ENCODE measurements at regions of chr3 and their contacts with region 1.

Region 1: GRCh38 chr3:179071550-179072397 is at the start of gene ZMAT3:
- DNase-seq: peak; percentile 81 to 89 (median 88)
- ATAC-seq: peak; percentile 92
- H3K4me3 ChIP-seq: peak within 1 kb of the TSS; percentile 66
- H3K27ac ChIP-seq: peak within 1 kb of the TSS; percentile 46
- H3K4me1 ChIP-seq: peaks cover 7 to 17% of the 10 kb centered on the region in 2 experiments; a peak in 4 of 5 replicates
- H3K27me3 ChIP-seq: no peaks in the 10 kb centered on the region
- CTCF ChIP-seq: no peak
- EP300 ChIP-seq: no peak
- POLR2A ChIP-seq: peak; percentile 84
- RAD21 ChIP-seq: no peak
- polyA plus RNA-seq, gene ZMAT3: 0.87 to 1.2 TPM

Region 2: DNA sequence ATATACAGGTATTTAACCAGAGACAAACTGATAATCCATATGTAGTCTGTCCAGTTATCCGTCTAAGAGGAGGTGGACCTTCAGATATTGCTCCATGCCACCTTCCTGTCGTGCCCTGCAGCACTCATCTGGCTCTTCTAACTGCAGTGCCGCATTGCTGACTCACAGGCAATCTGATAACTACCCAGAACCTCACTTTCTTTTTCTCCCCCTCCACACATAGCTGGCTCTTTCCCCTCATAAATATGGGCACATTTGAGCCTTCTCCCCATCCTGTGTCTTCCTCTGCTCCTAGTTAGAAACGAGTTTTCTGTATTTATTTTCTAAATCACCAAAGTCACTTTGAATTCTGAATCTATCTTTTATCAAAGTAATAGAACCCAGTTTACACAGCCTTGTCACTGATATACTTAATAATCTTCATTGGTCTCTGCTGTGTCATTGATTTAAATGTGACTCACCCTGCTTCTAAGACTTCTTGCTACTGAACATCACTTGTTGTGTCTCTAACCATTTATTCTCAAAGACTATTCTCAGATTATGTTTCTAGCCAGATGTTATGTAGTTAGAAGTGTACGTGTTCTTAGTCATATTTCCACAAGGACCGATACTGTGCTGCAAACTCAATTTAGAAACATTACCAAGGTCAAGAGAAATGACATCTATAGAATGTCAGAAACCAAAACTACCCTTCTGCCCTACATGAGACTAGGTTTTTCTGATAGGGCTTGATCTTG is 552.9 kb before region 1 on chr3:
- CTCF ChIA-PET with region 1: no interaction called
- POLR2A ChIA-PET with region 1: no interaction called
- in situ Hi-C with region 1: no loop called
- intact Hi-C with region 1: no loop called
- DNase-seq: no peak
- ATAC-seq: no peak
- H3K4me3 ChIP-seq: no peak overlapping the region
- H3K27ac ChIP-seq: no peak overlapping the region
- H3K4me1 ChIP-seq: no peaks in the 10 kb centered on the region
- H3K27me3 ChIP-seq: no peaks in the 10 kb centered on the region
- CTCF ChIP-seq: no peak
- EP300 ChIP-seq: no peak
- POLR2A ChIP-seq: no peak
- RAD21 ChIP-seq: no peak

Region 3: DNA sequence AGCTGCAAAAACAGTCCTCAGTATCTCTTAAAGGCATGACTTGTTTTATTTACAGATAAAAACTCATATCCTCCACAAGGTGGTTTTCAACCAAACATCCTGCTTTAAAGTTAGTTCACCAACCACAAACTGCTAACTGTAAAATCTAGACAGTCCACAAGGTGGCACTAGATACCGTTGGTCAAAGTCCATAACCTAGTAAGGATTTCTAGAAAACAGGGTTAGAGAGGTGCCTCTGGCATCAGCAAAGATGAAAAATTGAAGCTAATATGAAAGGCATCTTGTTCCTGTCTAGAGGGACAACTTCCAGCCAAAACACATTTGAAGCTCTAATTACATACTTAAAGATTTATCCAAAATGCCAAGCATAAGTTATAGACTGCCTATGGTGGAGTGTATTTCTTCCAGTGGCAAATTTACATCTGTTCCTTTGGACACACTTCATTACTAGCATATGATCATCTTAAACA is 56.2 kb before region 1 on chr3:
- CTCF ChIA-PET with region 1: no interaction called
- POLR2A ChIA-PET with region 1: no interaction called
- in situ Hi-C with region 1: no loop called
- intact Hi-C with region 1: loop called (anchors 2 kb)
- DNase-seq: peak; percentile 56 to 87 (median 64)
- ATAC-seq: peak; percentile 92
- H3K4me3 ChIP-seq: no peak overlapping the region
- H3K27ac ChIP-seq: no peak overlapping the region
- H3K4me1 ChIP-seq: peaks cover 0 to 6% of the 10 kb centered on the region in 2 experiments; a peak in 2 of 5 replicates
- H3K27me3 ChIP-seq: no peaks in the 10 kb centered on the region
- CTCF ChIP-seq: peak; percentile 80 to 91 (median 85)
- EP300 ChIP-seq: no peak
- POLR2A ChIP-seq: no peak
- RAD21 ChIP-seq: peak; percentile 96 to 97

Region 4: GRCh38 chr3:179100652-179101051 is 28.9 kb after region 1 on chr3:
- CTCF ChIA-PET with region 1: interaction called, 6 read pairs
- POLR2A ChIA-PET with region 1: no interaction called
- in situ Hi-C with region 1: no loop called
- intact Hi-C with region 1: loop called (anchors 2 kb)
- DNase-seq: peak; percentile 13 to 84 (median 38)
- ATAC-seq: peak; percentile 90
- H3K4me3 ChIP-seq: no peak overlapping the region
- H3K27ac ChIP-seq: peak overlapping the region; percentile 27; the same call in 1 of the 3 replicates
- H3K4me1 ChIP-seq: peaks cover 5 to 7% of the 10 kb centered on the region in 2 experiments; a peak in 4 of 5 replicates
- H3K27me3 ChIP-seq: no peaks in the 10 kb centered on the region
- CTCF ChIP-seq: no peak
- EP300 ChIP-seq: peak; percentile 39; the same call in 1 of the 2 replicates
- POLR2A ChIP-seq: no peak
- RAD21 ChIP-seq: 0 out of 4 replicates have a peak, but pooled peaks of 1 of the 2 experiments have one; percentile 16

Region 5: DNA sequence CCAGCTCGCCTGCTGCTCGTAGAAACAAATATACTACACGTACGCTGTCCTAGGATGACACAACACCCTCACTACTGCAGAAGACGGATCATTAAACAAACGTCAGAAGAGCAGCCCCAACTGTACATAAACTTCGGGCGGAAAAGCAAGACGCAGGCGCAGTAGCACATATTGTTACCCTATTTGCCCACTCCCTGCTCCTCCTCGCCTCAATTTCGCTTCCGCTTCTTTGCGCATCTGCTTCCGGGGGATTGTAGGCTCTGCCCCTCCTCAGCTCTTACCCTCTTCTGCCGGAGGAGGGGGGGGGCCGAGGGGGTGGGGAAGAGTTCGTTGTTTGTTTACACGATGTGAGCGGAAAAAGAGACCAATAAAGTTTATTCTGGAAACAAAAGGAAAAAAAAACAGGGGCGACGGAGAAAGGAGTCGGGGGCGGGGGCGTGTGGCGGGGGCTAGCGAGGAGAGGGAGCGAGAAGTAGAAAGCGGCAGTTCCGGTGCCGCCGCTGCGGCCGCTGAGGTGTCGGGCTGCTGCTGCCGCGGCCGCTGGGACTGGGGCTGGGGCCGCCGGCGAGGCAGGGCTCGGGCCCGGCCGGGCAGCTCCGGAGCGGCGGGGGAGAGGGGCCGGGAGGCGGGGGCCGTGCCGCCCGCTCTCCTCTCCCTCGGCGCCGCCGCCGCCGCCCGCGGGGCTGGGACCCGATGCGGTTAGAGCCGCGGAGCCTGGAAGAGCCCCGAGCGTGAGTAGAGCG is 76.3 kb after region 1 on chr3 and contains the start of gene PIK3CA:
- CTCF ChIA-PET with region 1: no interaction called
- POLR2A ChIA-PET with region 1: no interaction called
- in situ Hi-C with region 1: no loop called
- intact Hi-C with region 1: loop called (anchors 5 kb)
- DNase-seq: peak; percentile 90 to 98 (median 92)
- ATAC-seq: peak; percentile 90
- H3K4me3 ChIP-seq: peak within 1 kb of the TSS; percentile 95
- H3K27ac ChIP-seq: peak within 1 kb of the TSS; percentile 90
- H3K4me1 ChIP-seq: peaks cover 5 to 14% of the 10 kb centered on the region in 2 experiments; a peak in 3 of 5 replicates
- H3K27me3 ChIP-seq: no peaks in the 10 kb centered on the region
- CTCF ChIP-seq: no peak
- EP300 ChIP-seq: no peak; the same call in none of the 2 replicates
- POLR2A ChIP-seq: peak; percentile 81
- RAD21 ChIP-seq: no peak
- polyA plus RNA-seq, gene PIK3CA: 3.8 to 4.8 TPM

Region 6: DNA sequence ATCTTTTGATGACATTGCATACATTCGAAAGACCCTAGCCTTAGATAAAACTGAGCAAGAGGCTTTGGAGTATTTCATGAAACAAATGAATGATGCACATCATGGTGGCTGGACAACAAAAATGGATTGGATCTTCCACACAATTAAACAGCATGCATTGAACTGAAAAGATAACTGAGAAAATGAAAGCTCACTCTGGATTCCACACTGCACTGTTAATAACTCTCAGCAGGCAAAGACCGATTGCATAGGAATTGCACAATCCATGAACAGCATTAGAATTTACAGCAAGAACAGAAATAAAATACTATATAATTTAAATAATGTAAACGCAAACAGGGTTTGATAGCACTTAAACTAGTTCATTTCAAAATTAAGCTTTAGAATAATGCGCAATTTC is 162.4 kb after region 1 on chr3:
- CTCF ChIA-PET with region 1: no interaction called
- POLR2A ChIA-PET with region 1: no interaction called
- in situ Hi-C with region 1: no loop called
- intact Hi-C with region 1: loop called (anchors 5 kb)
- DNase-seq: no peak
- ATAC-seq: no peak
- H3K4me3 ChIP-seq: no peak overlapping the region
- H3K27ac ChIP-seq: no peak overlapping the region
- H3K4me1 ChIP-seq: peaks cover 0 to 5% of the 10 kb centered on the region in 2 experiments; a peak in 1 of 5 replicates
- H3K27me3 ChIP-seq: no peaks in the 10 kb centered on the region
- CTCF ChIP-seq: no peak
- EP300 ChIP-seq: no peak
- POLR2A ChIP-seq: no peak
- RAD21 ChIP-seq: no peak

Region 7: DNA sequence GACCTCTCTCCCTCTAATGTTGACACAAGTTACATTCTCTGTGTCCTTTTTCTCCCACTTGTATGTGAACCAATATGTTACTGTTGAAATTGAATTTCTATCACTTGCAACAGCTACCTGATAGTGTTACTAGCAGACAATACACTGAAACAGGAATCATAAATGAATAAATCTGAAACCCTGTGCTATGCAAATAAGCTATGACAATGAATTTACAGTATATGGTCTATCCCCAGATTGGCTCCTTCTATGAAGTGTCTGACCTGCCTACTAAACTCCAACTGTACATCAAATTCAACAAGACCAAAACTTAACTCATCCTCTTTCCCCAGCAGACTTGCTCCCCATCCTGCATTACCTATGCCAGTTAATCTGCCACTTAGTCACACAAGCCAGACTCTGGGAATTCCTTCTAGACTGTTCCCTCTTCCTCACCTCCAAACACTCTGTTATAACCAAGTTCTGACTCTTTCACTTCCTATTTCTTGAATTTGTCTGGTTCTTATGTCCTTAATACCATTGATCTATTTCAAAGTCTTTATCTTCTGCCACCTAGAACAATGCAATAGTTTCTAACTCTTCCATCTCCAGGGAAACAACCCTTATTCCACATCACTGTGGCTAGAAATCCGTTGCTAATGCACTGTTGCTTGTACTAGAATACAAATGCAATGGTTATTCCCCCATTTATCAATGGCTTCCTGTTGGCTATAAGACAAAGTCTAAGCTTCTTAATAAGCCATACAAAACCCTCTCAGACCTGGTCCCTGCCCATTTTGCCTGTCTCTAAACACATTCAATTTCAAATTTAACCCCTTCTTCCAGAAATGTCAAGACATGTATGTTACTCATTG is 237.7 kb after region 1 on chr3:
- CTCF ChIA-PET with region 1: interaction called, 25 read pairs
- POLR2A ChIA-PET with region 1: no interaction called
- in situ Hi-C with region 1: no loop called
- intact Hi-C with region 1: no loop called
- DNase-seq: no peak
- ATAC-seq: no peak
- H3K4me3 ChIP-seq: no peak overlapping the region
- H3K27ac ChIP-seq: no peak overlapping the region
- H3K4me1 ChIP-seq: peaks cover 0 to 3% of the 10 kb centered on the region in 2 experiments; a peak in 3 of 5 replicates
- H3K27me3 ChIP-seq: no peaks in the 10 kb centered on the region
- CTCF ChIP-seq: no peak
- EP300 ChIP-seq: no peak
- POLR2A ChIP-seq: no peak
- RAD21 ChIP-seq: no peak

Region 8: DNA sequence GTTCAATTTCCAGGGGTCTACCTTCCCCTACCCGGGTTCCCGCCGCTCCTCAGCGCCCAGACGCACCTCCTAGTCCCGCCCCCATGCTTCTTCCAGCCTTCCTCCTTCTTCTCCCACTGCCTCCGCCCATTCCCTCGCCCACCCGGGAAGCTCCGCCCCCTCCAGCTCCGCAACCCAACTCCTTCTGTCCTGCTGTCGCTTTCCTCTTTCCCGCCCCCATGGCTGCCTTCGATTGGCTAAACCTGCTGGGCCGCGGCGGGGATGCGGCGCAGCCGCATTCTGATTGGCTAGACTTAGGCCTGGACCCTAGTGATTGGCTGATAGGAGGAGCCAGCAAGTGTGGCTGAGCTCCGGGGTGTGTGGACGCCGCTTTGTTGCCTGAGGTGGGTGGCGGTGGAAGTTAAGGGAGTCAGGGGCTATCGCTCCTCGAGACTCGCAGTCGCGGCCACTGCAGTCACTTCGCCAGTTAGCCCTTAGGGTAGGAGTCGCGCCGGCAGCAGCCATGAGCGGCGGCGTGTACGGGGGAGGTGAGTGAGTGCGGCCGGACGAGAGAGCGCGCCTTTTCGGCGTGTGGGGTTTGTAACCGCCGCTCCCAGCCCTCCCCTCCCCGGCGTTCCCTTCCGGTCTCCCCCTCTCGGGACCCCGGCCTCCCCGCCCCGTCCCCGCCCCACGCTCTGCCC is 491.0 kb after region 1 on chr3 and contains the start of gene ACTL6A:
- CTCF ChIA-PET with region 1: no interaction called
- POLR2A ChIA-PET with region 1: no interaction called
- in situ Hi-C with region 1: no loop called
- intact Hi-C with region 1: loop called (anchors 2 kb)
- DNase-seq: peak; percentile 99 to 100 (median 99)
- ATAC-seq: peak; percentile 96
- H3K4me3 ChIP-seq: peak within 1 kb of the TSS; percentile 79
- H3K27ac ChIP-seq: peak within 1 kb of the TSS; percentile 93
- H3K4me1 ChIP-seq: peaks cover 8 to 9% of the 10 kb centered on the region in 2 experiments; a peak in 3 of 5 replicates
- H3K27me3 ChIP-seq: no peaks in the 10 kb centered on the region
- CTCF ChIP-seq: no peak
- EP300 ChIP-seq: no peak
- POLR2A ChIP-seq: peak; percentile 98
- RAD21 ChIP-seq: no peak
- polyA plus RNA-seq, gene ACTL6A: 229 to 243 TPM